H1 (cell line): ENCODE measurements at regions of chr6 and their contacts with region 1.

Region 1: GRCh38 chr6:161575523-161576254 is 301.8 kb upstream of the AGPAT4 start:
- DNase-seq: no peak
- H3K4me3 ChIP-seq: no peak overlapping the region
- H3K27ac ChIP-seq: no peak overlapping the region
- H3K4me1 ChIP-seq: peaks cover 0 to 3% (median 0%) of the 10 kb centered on the region in 4 experiments; a peak in 1 of 7 replicates
- H3K27me3 ChIP-seq: no peaks in the 10 kb centered on the region
- CTCF ChIP-seq: no peak
- EP300 ChIP-seq: no peak
- POLR2A ChIP-seq: no peak
- RAD21 ChIP-seq: no peak

Region 2: DNA sequence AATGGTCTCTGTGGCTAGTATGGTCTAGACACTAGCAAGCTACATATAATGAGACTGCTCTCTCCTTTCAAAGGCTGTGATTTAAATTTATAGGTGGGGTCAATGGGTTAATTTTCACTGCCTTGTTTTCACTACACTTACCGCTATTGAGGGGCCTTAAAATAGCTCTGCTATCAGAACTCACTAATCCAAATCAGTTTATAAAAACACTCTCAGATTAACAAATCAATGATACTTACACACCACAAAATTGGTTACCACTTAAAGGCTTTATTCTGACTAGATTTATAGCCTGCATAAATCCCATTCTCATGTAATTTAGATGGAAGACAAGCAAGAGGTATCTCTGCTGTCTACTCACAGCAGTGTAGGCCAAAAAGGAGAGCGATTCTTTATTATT is 11.2 kb after region 1 on chr6:
- CTCF ChIA-PET with region 1: interaction called, 11 read pairs
- POLR2A ChIA-PET with region 1: no interaction called
- DNase-seq: no peak
- H3K4me3 ChIP-seq: no peak overlapping the region
- H3K27ac ChIP-seq: no peak overlapping the region
- H3K4me1 ChIP-seq: no peaks in the 10 kb centered on the region
- H3K27me3 ChIP-seq: no peaks in the 10 kb centered on the region
- CTCF ChIP-seq: no peak
- EP300 ChIP-seq: no peak
- POLR2A ChIP-seq: no peak
- RAD21 ChIP-seq: no peak